ENCODE measurements at regions of chr1 and their contacts with region 1.

Region 1: GRCh38 chr1:234610348-234611152 is 572 bp upstream of the IRF2BP2 start:
- DNase-seq: peak; percentile 89 to 96 (median 94)
- H3K4me3 ChIP-seq: peak overlapping the region; percentile 67 to 88 (median 77)
- H3K4me3 Mint-ChIP-seq: peak overlapping the region; percentile 90 to 92
- H3K27ac ChIP-seq: peak overlapping the region; percentile 96 to 98
- H3K27ac Mint-ChIP-seq: peak overlapping the region; percentile 98 to 100 (median 99)
- H3K4me1 ChIP-seq: peaks cover 48 to 54% of the 10 kb centered on the region in 2 donors
- H3K4me1 Mint-ChIP-seq: peaks cover 31% of the 10 kb centered on the region
- H3K27me3 ChIP-seq: no peaks in the 10 kb centered on the region
- H3K27me3 Mint-ChIP-seq: no peaks in the 10 kb centered on the region
- CTCF ChIP-seq: no peak

Region 2: DNA sequence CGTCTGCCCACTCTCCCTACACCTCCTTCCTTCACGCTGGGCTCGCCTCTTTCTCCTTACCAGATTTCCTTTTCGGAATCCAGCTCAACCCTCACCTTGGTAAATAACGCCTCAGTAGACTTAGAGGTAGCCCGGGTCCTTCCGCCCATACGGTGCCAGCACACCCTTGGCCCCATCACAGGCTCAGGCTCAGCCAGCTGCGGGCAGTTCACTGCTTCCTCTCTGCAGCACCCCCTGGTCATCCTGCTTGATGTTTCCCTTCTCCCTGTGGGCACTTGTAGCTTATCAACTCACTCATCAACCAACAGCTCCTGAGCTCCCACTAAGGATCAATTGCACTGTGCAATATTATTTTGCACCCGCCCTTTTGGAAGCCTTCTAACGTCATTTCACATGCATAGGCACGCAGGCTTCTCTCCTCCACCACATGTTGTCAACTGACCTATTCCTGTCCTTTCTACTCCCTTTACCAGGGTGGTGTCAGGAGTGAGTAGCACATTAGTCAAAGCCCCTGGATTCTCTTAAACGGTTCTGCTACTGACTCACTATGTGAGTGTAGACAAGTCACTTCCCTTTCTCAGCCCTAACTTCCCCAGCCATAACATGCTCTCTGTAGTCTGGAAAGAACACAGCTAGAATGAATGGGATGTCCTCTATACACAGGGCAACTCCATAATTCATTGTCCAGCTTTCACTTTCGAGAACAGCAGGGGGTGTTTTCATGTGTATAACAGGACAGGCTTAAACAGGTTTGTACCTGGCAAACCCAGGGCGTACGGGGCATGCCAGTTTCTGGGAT is 46.5 kb after region 1 on chr1:
- intact Hi-C with region 1: loop called (anchors 5 kb)
- DNase-seq: peak; percentile 98 to 100 (median 99)
- H3K4me3 ChIP-seq: peak overlapping the region in 1 of 3 experiments; percentile 42
- H3K4me3 Mint-ChIP-seq: peak overlapping the region; percentile 65 to 79
- H3K27ac ChIP-seq: peak overlapping the region; percentile 96 to 98
- H3K27ac Mint-ChIP-seq: peak overlapping the region; percentile 98 to 100 (median 99)
- H3K4me1 ChIP-seq: peaks cover 33 to 52% of the 10 kb centered on the region in 2 donors
- H3K4me1 Mint-ChIP-seq: peaks cover 57% of the 10 kb centered on the region
- H3K27me3 ChIP-seq: no peaks in the 10 kb centered on the region
- H3K27me3 Mint-ChIP-seq: no peaks in the 10 kb centered on the region
- CTCF ChIP-seq: no peak

Region 3: DNA sequence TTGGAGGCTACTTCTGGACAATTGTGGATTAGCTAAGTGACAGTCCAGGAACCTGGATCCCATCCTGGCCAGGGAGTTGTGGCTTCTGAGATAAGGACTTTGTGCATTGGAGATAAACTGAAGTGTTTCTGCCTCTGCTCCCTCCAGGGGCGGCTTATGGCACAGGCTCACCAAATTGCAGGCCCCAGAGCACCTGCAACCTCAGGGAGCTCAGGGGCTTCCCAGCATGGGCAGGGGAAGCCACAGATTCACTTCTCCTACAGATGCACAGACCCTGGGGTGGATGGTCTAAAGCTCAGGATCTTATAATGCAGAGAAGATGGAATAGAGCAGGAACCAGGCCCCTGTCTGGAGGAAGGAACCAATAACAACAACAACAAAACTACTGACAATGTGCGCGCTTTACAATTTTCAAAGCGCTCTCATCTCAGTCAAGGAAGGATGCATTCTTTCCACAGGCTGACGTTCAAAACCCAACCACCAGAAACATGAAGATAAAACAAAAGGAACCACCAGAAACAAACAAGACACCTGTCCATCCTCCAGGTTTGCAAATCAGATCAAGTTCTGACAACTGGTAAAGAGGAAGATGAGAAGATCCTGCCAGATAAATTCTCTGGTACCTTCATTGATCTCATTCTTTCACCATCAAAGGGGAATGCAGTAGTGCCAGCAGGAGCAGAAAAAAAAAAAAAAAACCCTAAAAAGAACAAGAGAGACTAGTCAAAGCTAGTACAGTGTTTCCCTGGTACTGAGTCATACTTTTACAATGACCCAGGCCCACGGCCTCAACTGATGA is 120.4 kb after region 1 on chr1:
- intact Hi-C with region 1: loop called in 1 of 2 experiments (anchors 2 kb)
- DNase-seq: peak in 2 of 3 donors; percentile 83 to 86
- H3K4me3 ChIP-seq: peak overlapping the region in 1 of 3 experiments; percentile 7
- H3K4me3 Mint-ChIP-seq: no peak overlapping the region
- H3K27ac ChIP-seq: peak overlapping the region; percentile 15 to 74
- H3K27ac Mint-ChIP-seq: peak overlapping the region; percentile 76 to 94 (median 85)
- H3K4me1 ChIP-seq: peaks cover 59 to 64% of the 10 kb centered on the region in 2 donors
- H3K4me1 Mint-ChIP-seq: peaks cover 74% of the 10 kb centered on the region
- H3K27me3 ChIP-seq: no peaks in the 10 kb centered on the region
- H3K27me3 Mint-ChIP-seq: peaks cover 0 to 2% (median 0%) of the 10 kb centered on the region in 3 donors
- CTCF ChIP-seq: no peak

Region 4: GRCh38 chr1:234842726-234843641 is 232.4 kb after region 1 on chr1:
- intact Hi-C with region 1: loop called in 1 of 2 experiments (anchors 5 kb)
- DNase-seq: peak in 2 of 3 donors; percentile 44 to 79
- H3K4me3 ChIP-seq: peak overlapping the region in 1 of 3 experiments; percentile 41
- H3K4me3 Mint-ChIP-seq: peak overlapping the region; percentile 64 to 65
- H3K27ac ChIP-seq: peak overlapping the region; percentile 98 to 100
- H3K27ac Mint-ChIP-seq: peak overlapping the region; percentile 97 to 99 (median 98)
- H3K4me1 ChIP-seq: peaks cover 78 to 91% of the 10 kb centered on the region in 2 donors
- H3K4me1 Mint-ChIP-seq: peaks cover 95% of the 10 kb centered on the region
- H3K27me3 ChIP-seq: no peaks in the 10 kb centered on the region
- H3K27me3 Mint-ChIP-seq: no peaks in the 10 kb centered on the region
- CTCF ChIP-seq: no peak

Region 5: GRCh38 chr1:234963180-234963903 is 352.8 kb after region 1 on chr1:
- intact Hi-C with region 1: loop called in 1 of 2 experiments (anchors 5 kb)
- DNase-seq: peak; percentile 98 to 100 (median 99)
- H3K4me3 ChIP-seq: peak overlapping the region in 1 of 3 experiments; percentile 19
- H3K4me3 Mint-ChIP-seq: peak overlapping the region; percentile 70 to 85
- H3K27ac ChIP-seq: peak overlapping the region; percentile 89 to 100
- H3K27ac Mint-ChIP-seq: peak overlapping the region; percentile 98 to 100 (median 100)
- H3K4me1 ChIP-seq: peaks cover 73 to 78% of the 10 kb centered on the region in 2 donors
- H3K4me1 Mint-ChIP-seq: peaks cover 74% of the 10 kb centered on the region
- H3K27me3 ChIP-seq: no peaks in the 10 kb centered on the region
- H3K27me3 Mint-ChIP-seq: peaks cover 0 to 2% (median 0%) of the 10 kb centered on the region in 3 donors
- CTCF ChIP-seq: no peak

Region 6: GRCh38 chr1:235075188-235075926 is 464.8 kb after region 1 on chr1:
- intact Hi-C with region 1: loop called in 1 of 2 experiments (anchors 5 kb)
- DNase-seq: peak; percentile 66 to 70 (median 67)
- H3K4me3 ChIP-seq: no peak overlapping the region
- H3K4me3 Mint-ChIP-seq: peak overlapping the region in 1 of 2 donors; percentile 48
- H3K27ac ChIP-seq: peak overlapping the region in 1 of 2 donors; percentile 80
- H3K27ac Mint-ChIP-seq: peak overlapping the region; percentile 73 to 95 (median 91)
- H3K4me1 ChIP-seq: peaks cover 64 to 77% of the 10 kb centered on the region in 2 donors
- H3K4me1 Mint-ChIP-seq: peaks cover 39% of the 10 kb centered on the region
- H3K27me3 ChIP-seq: no peaks in the 10 kb centered on the region
- H3K27me3 Mint-ChIP-seq: peaks cover 0 to 2% (median 0%) of the 10 kb centered on the region in 3 donors
- CTCF ChIP-seq: no peak

Measured in CD14-positive monocyte (primary cell).